A549 (cell line): ENCODE measurements at regions of chr1 and their contacts with region 1.

Region 1: GRCh38 chr1:36300526-36300925 is 5.6 kb upstream of the SH3D21 start:
- DNase-seq: no peak
- ATAC-seq: no peak
- H3K4me3 ChIP-seq: no peak overlapping the region
- H3K27ac ChIP-seq: peak overlapping the region; percentile 25 to 56; a peak in 3 of 6 replicates
- H3K4me1 ChIP-seq: peaks cover 32% of the 10 kb centered on the region
- CTCF ChIP-seq: no peak
- EP300 ChIP-seq: no peak
- POLR2A ChIP-seq: no peak
- RAD21 ChIP-seq: no peak

Region 2: GRCh38 chr1:36285448-36286101 is 15.0 kb before region 1 on chr1:
- CTCF ChIA-PET with region 1: interaction called, 12 read pairs
- POLR2A ChIA-PET with region 1: no interaction called
- DNase-seq: peak; percentile 73 to 84
- ATAC-seq: peak; percentile 92 to 96
- H3K4me3 ChIP-seq: no peak overlapping the region
- H3K27ac ChIP-seq: peak overlapping the region in 1 of 2 experiments; percentile 43; a peak in 2 of 6 replicates
- H3K4me1 ChIP-seq: peaks cover 28% of the 10 kb centered on the region; the same call in 2 of the 3 replicates
- CTCF ChIP-seq: peak; percentile 81
- EP300 ChIP-seq: no peak
- POLR2A ChIP-seq: no peak
- RAD21 ChIP-seq: peak; percentile 77 to 85